ENCODE measurements at regions of chr1 and their contacts with region 1.

Region 1: GRCh38 chr1:32773018-32773763 is 44.0 kb downstream of the YARS1 start:
- DNase-seq: peak; percentile 89 to 92 (median 90)
- ATAC-seq: peak; percentile 88
- H3K4me3 ChIP-seq: no peak overlapping the region
- H3K27ac ChIP-seq: peak overlapping the region; percentile 0 to 62 (median 45)
- H3K4me1 ChIP-seq: peaks cover 39% of the 10 kb centered on the region
- H3K27me3 ChIP-seq: no peaks in the 10 kb centered on the region
- CTCF ChIP-seq: peak; percentile 82 to 97 (median 96)
- POLR2A ChIP-seq: peak in 1 of 3 donors; percentile 21

Region 2: GRCh38 chr1:32500387-32501209 is 272.6 kb before region 1 on chr1:
- intact Hi-C with region 1: no loop called
- DNase-seq: peak; percentile 62 to 73 (median 66)
- ATAC-seq: peak; percentile 91
- H3K4me3 ChIP-seq: peak overlapping the region; percentile 47 to 82
- H3K27ac ChIP-seq: peak overlapping the region; percentile 76 to 95 (median 90)
- H3K4me1 ChIP-seq: peaks cover 6% of the 10 kb centered on the region
- H3K27me3 ChIP-seq: no peaks in the 10 kb centered on the region
- CTCF ChIP-seq: peak in 4 of 7 experiments; percentile 27 to 67 (median 46)
- POLR2A ChIP-seq: peak; percentile 6 to 49 (median 15)

Region 3: DNA sequence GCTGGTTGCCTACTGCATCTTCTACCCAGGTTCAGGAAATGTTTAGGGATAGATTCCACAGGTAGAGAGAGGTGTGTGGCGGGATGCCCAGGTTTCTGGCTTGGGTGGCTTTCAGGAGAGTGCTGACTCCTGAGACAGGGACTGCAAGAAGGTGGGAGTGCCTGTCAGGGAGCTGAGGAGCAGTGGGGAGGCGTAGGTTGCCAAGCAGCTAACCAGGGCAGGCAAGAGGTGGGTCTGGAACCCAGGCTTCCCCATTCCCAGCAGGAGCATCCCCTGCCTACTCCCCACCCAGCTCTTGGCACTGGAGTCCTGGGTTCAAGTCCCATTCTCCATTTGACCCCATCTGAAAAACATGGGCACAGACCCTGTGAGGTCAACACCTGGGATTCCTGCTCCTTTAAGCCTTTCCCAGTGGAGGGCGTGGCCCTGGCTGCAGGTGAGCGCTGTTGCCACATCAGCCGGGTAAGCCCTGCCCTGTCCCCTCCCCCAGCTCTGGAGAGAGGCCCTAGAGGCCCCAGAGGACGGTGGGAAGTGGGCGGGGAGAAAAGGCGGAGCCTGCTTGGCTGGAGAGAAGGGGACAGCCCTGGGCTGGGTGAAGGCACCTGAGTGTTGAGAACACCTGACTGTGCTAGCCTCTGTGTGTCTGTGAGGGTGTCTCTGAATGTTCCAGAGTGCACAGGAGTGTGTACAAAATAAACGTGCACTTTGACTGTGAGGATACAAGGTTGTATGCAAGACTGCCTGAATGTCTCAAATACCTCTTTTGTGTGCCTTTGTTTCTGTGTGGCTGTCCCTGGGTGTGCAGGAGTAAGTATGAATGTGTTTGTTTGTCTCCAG is 56.7 kb before region 1 on chr1:
- intact Hi-C with region 1: loop called (anchors 5 kb)
- DNase-seq: peak; percentile 99 to 100 (median 100)
- ATAC-seq: peak; percentile 97
- H3K4me3 ChIP-seq: no peak overlapping the region
- H3K27ac ChIP-seq: peak overlapping the region; percentile 67 to 89 (median 84)
- H3K4me1 ChIP-seq: peaks cover 26% of the 10 kb centered on the region
- H3K27me3 ChIP-seq: no peaks in the 10 kb centered on the region
- CTCF ChIP-seq: peak in 4 of 7 experiments; percentile 3 to 36 (median 20)
- POLR2A ChIP-seq: peak in 2 of 3 donors; percentile 47 to 61

Region 4: GRCh38 chr1:32733582-32734321 is 39.4 kb before region 1 on chr1:
- intact Hi-C with region 1: loop called (anchors 5 kb)
- DNase-seq: no peak
- ATAC-seq: no peak
- H3K4me3 ChIP-seq: no peak overlapping the region
- H3K27ac ChIP-seq: no peak overlapping the region
- H3K4me1 ChIP-seq: peaks cover 22% of the 10 kb centered on the region
- H3K27me3 ChIP-seq: no peaks in the 10 kb centered on the region
- CTCF ChIP-seq: no peak
- POLR2A ChIP-seq: no peak

Region 5: DNA sequence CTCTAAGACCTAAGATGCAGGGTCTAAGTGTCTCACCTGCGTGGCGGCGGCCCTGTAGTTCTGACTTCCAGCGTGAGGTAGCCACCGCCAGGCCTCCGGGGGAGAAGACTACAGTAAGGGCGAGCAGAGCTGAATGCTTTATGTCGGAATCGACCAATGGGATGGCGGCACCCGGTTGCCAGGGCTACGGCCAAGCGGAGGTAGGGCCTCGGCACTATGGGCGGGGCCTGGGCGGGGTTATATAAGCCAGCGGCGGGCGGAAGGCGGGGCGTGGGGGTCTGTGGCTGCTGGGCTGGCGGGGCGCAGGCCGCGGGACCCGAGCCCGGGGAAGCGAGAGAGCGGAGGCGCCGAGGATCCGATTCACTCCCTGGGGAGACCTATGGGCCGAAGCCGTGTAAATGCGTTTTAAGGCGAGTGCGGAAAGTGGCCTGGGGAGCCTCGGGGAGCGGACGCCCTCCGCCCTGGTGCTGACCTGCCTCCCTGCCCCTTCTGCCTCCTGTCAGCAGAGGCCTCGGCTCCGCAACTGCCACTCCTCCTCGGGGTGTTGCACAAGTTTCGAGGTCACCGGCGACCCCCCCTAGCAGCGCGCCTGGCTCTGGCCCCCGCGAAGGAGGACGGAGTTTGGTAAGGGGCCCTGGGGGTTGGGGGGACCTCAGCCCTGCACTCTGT is 307.8 kb after region 1 on chr1 and contains the start of gene AZIN2:
- intact Hi-C with region 1: no loop called
- DNase-seq: peak; percentile 98
- ATAC-seq: peak; percentile 100
- H3K4me3 ChIP-seq: peak within 1 kb of the TSS; percentile 41 to 61
- H3K27ac ChIP-seq: peak within 1 kb of the TSS in 2 of 4 donors; percentile 12 to 40
- H3K4me1 ChIP-seq: peaks cover 19% of the 10 kb centered on the region
- H3K27me3 ChIP-seq: no peaks in the 10 kb centered on the region
- CTCF ChIP-seq: peak in 1 of 7 experiments; percentile 11
- POLR2A ChIP-seq: peak; percentile 69 to 84 (median 73)
- total RNA-seq, gene AZIN2: 1.0 to 1.6 TPM

Measured in body of pancreas (tissue), 4 donors.